CD4-positive, alpha-beta memory T cell (primary cell): ENCODE measurements at regions of chr7 and their contacts with region 1.

Region 1: DNA sequence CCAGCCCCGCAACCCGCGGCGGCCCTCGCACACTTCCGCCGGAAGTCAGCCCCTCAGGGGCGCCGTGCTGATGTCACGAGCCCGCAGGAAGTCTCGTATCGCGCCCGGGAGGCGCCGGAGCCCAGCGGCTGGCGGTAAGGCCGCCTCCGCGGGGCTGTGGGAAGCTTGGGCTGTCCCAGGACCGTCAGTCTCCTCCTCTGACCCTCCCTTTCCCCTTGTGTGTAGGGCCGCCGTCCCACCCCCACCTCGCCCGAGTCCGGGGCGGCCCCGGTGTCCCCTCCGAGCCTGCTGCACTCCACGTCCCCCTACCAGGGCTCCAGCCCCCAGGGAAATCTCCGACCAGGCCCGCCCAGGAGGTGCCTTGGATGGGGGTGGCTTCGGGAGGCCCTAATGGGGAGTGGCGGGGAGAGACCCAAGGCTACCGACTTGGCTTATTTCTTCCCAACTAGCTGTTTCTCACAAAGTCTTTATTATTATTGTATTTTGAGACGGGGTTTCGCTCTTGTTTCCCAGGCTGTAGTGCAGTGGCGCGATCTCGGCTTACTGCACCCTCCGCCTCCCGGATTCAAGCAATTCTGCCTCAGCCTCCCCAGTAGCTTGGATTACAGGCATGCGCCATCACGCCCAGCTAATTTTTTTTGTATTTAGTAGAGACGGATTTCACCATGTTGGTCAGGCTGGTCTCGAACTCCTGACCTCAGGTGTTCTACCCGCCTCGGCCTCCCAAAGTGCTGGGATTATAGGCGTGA is at the start of gene ZDHHC4:
- DNase-seq: peak; percentile 81 to 83 (median 81)
- H3K4me3 ChIP-seq: peak within 1 kb of the TSS; percentile 36 to 79
- H3K4me3 Mint-ChIP-seq: peak within 1 kb of the TSS; percentile 86 to 94 (median 89)
- H3K27ac ChIP-seq: peak within 1 kb of the TSS; percentile 84
- H3K27ac Mint-ChIP-seq: peak within 1 kb of the TSS; percentile 88 to 97 (median 94)
- H3K4me1 ChIP-seq: peaks cover 12% of the 10 kb centered on the region
- H3K4me1 Mint-ChIP-seq: peaks cover 5 to 26% (median 7%) of the 10 kb centered on the region in 4 donors
- H3K27me3 ChIP-seq: no peaks in the 10 kb centered on the region
- H3K27me3 Mint-ChIP-seq: no peaks in the 10 kb centered on the region
- total RNA-seq, gene ZDHHC4: 31.6 to 31.9 TPM

Region 2: DNA sequence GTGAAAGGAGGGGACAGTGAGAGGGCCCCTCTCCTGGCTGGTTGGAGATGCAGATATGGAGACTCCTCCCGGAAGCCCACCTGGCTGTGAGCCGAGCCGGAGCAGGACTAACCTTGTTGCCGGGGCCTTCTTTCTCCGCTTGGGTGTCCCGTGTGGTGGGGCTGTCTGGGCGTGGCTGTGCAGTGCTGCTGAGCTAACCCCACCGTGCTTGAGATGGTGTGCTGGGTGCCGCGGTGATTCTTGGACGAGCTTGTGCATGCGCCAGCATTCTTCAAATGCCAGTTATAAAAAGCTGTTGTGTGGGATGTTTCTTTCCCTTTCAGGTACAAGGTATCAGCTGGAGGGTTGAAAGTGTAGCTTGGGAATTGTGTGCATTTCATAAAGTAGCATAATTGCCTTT is 178.6 kb before region 1 on chr7:
- CTCF ChIA-PET with region 1: no interaction called
- POLR2A ChIA-PET with region 1: no interaction called
- intact Hi-C with region 1: no loop called
- DNase-seq: no peak
- H3K4me3 ChIP-seq: no peak overlapping the region
- H3K4me3 Mint-ChIP-seq: no peak overlapping the region
- H3K27ac ChIP-seq: no peak overlapping the region
- H3K27ac Mint-ChIP-seq: peak overlapping the region in 2 of 7 donors; percentile 59 to 85
- H3K4me1 ChIP-seq: peaks cover 26% of the 10 kb centered on the region
- H3K4me1 Mint-ChIP-seq: peaks cover 13 to 45% (median 31%) of the 10 kb centered on the region in 4 donors
- H3K27me3 ChIP-seq: no peaks in the 10 kb centered on the region
- H3K27me3 Mint-ChIP-seq: no peaks in the 10 kb centered on the region

Region 3: GRCh38 chr7:6516387-6516983 is 61.1 kb before region 1 on chr7:
- CTCF ChIA-PET with region 1: interaction called, 17 read pairs
- POLR2A ChIA-PET with region 1: no interaction called
- intact Hi-C with region 1: no loop called
- DNase-seq: peak; percentile 50 to 60 (median 58)
- H3K4me3 ChIP-seq: peak overlapping the region; percentile 17 to 39
- H3K4me3 Mint-ChIP-seq: peak overlapping the region; percentile 70 to 89 (median 84)
- H3K27ac ChIP-seq: no peak overlapping the region
- H3K27ac Mint-ChIP-seq: peak overlapping the region in 4 of 7 donors; percentile 5 to 76 (median 38)
- H3K4me1 ChIP-seq: peaks cover 4% of the 10 kb centered on the region
- H3K4me1 Mint-ChIP-seq: peaks cover 4 to 10% (median 6%) of the 10 kb centered on the region in 4 donors
- H3K27me3 ChIP-seq: no peaks in the 10 kb centered on the region
- H3K27me3 Mint-ChIP-seq: no peaks in the 10 kb centered on the region

Region 4: DNA sequence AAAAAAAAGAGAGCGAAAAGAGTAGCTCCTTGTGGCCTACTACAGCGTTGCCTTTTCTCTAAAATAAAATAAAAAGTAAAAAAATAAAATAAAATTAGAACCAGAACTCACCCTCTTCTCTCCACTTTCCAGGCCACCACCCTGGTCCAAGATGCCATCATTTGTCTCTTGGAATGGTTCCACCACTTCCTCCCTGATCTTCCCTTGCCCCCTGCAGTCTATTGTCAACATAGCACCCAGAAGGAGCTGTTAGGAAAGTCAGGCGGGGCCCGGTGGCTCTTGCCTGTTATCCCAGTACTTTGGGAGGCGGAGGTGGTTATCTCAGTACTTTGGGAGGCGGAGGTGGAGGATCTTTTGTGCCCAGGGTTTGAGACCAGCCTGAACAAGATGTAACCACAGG is 18.7 kb before region 1 on chr7:
- CTCF ChIA-PET with region 1: interaction called, 11 read pairs
- POLR2A ChIA-PET with region 1: interaction called, 4 read pairs
- intact Hi-C with region 1: no loop called
- DNase-seq: no peak
- H3K4me3 ChIP-seq: no peak overlapping the region
- H3K4me3 Mint-ChIP-seq: no peak overlapping the region
- H3K27ac ChIP-seq: no peak overlapping the region
- H3K27ac Mint-ChIP-seq: peak overlapping the region in 1 of 7 donors; percentile 26
- H3K4me1 ChIP-seq: peaks cover 7% of the 10 kb centered on the region
- H3K4me1 Mint-ChIP-seq: peaks cover 2 to 4% (median 3%) of the 10 kb centered on the region in 4 donors
- H3K27me3 ChIP-seq: no peaks in the 10 kb centered on the region
- H3K27me3 Mint-ChIP-seq: peaks cover 0 to 3% of the 10 kb centered on the region in 2 donors

Region 5: DNA sequence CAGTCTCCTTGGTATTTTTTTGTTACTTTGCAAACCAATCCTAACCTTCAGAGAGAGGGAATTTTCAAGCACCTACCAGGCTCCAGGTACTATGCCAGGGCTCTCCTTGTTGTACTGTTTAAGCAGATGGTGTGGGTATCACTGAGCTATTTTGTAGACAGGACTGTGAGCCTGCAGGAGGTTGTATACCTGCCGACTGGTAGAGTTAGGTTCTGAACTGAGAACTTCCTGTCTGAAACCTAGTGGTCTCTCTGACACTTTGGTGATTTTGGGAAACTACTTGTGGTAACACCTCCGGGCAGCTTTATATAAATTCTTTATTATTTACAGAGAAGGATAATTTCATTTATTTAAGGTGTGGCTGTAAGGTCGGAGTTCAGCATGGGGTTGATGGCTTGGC is 42.4 kb after region 1 on chr7:
- CTCF ChIA-PET with region 1: no interaction called
- POLR2A ChIA-PET with region 1: no interaction called
- intact Hi-C with region 1: no loop called
- DNase-seq: no peak
- H3K4me3 ChIP-seq: no peak overlapping the region
- H3K4me3 Mint-ChIP-seq: peak overlapping the region in 6 of 8 donors; percentile 30 to 87 (median 46)
- H3K27ac ChIP-seq: no peak overlapping the region
- H3K27ac Mint-ChIP-seq: peak overlapping the region in 4 of 7 donors; percentile 24 to 88 (median 52)
- H3K4me1 ChIP-seq: peaks cover 49% of the 10 kb centered on the region
- H3K4me1 Mint-ChIP-seq: peaks cover 31 to 60% (median 46%) of the 10 kb centered on the region in 4 donors
- H3K27me3 ChIP-seq: peaks cover under 1% of the 10 kb centered on the region
- H3K27me3 Mint-ChIP-seq: peaks cover 0 to 1% of the 10 kb centered on the region in 2 donors

Region 6: GRCh38 chr7:7237201-7237977 is 659.9 kb after region 1 on chr7:
- CTCF ChIA-PET with region 1: no interaction called
- POLR2A ChIA-PET with region 1: no interaction called
- intact Hi-C with region 1: no loop called
- DNase-seq: no peak
- H3K4me3 ChIP-seq: no peak overlapping the region
- H3K4me3 Mint-ChIP-seq: no peak overlapping the region
- H3K27ac ChIP-seq: no peak overlapping the region
- H3K27ac Mint-ChIP-seq: peak overlapping the region in 1 of 7 donors; percentile 36
- H3K4me1 ChIP-seq: no peaks in the 10 kb centered on the region
- H3K4me1 Mint-ChIP-seq: peaks cover 8 to 33% (median 28%) of the 10 kb centered on the region in 4 donors
- H3K27me3 ChIP-seq: no peaks in the 10 kb centered on the region
- H3K27me3 Mint-ChIP-seq: no peaks in the 10 kb centered on the region